Dorsolateral prefrontal cortex (tissue), 120 donors: ENCODE measurements at regions of chr13 and their contacts with region 1.

Region 1: DNA sequence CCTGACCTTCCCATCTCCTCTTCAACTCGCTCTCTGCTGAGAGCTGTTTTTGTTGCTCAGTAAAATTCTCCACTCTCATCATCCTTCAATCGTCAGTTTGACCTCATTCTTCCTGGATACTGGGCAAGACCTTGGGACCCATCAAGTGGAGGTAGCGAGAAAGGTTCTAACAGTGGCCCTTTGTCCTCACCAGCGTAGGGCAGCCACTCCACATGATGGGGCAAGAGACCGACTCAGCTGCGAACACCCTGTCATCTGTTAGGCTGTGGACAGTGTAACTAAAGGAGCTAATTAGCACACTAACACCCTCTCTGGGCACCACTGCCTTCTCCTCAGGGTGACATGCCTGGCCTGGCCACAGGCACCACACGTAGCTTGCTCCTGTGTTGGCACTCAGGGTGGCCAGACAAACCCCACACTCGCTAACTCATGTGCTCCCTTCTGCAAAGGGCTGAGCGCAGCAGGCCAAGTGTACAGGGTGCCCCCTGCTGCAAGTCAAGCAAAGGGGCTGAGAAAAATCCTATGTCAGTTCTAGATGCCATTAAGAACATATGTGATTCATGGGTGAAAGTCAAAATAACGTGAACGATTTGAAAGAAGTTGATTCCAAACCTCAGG is 1216.0 kb downstream of the SLITRK5 start:
- DNase-seq: no peak
- H3K4me3 ChIP-seq: no peak overlapping the region
- H3K27ac ChIP-seq: no peak overlapping the region
- H3K27me3 ChIP-seq: no peaks in the 10 kb centered on the region
- CTCF ChIP-seq: no peak

Region 2: DNA sequence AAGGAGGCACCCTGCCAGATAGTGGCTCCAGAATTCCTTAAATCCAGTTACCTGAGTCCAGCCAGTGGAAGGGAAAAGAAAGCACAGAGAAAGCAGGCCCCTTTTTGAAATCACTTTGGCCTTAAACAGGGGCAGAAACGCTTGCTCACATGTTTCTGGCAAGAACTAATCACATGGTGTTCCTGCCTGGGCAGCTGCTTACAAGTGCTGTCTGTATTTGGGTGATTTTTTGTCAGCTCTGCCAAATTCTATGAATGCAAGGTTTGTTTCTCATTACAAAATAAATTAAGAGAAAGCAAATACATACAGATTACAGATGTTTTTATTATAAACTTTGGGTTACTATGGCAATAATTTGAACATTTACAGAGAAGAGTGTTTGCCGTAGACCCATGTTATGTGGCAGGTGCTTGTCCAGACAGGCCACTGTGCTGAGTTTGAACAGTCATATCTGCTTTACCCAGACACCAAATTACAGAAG is 21.8 kb after region 1 on chr13:
- intact Hi-C with region 1: loop called in 1 of 2 experiments (anchors 2 kb)
- DNase-seq: no peak
- H3K4me3 ChIP-seq: no peak overlapping the region
- H3K27ac ChIP-seq: no peak overlapping the region
- H3K27me3 ChIP-seq: no peaks in the 10 kb centered on the region
- CTCF ChIP-seq: no peak

Region 3: GRCh38 chr13:88919970-88920628 is 32.9 kb after region 1 on chr13:
- intact Hi-C with region 1: no loop called
- DNase-seq: no peak
- H3K4me3 ChIP-seq: no peak overlapping the region
- H3K27ac ChIP-seq: no peak overlapping the region
- H3K27me3 ChIP-seq: no peaks in the 10 kb centered on the region
- CTCF ChIP-seq: no peak

Region 4: GRCh38 chr13:89163096-89163495 is 275.9 kb after region 1 on chr13:
- intact Hi-C with region 1: no loop called
- DNase-seq: peak in 5 of 10 donors; percentile 6 to 53 (median 50)
- H3K4me3 ChIP-seq: peak overlapping the region in 30 of 59 donors; percentile 3 to 54 (median 29)
- H3K27ac ChIP-seq: peak overlapping the region in 3 of 59 donors; percentile 12 to 19 (median 16)
- H3K27me3 ChIP-seq: no peaks in the 10 kb centered on the region
- CTCF ChIP-seq: no peak

Region 5: GRCh38 chr13:89695343-89696257 is 808.4 kb after region 1 on chr13:
- intact Hi-C with region 1: no loop called
- DNase-seq: peak in 1 of 10 donors; percentile 27
- H3K4me3 ChIP-seq: no peak overlapping the region
- H3K27ac ChIP-seq: no peak overlapping the region
- H3K27me3 ChIP-seq: no peaks in the 10 kb centered on the region
- CTCF ChIP-seq: peak; percentile 39 to 84 (median 68)